MCF 10A (cell line): ENCODE measurements at regions of chr14 and their contacts with region 1.

Region 1: GRCh38 chr14:35687335-35687939 is 121.7 kb downstream of the RALGAPA1 start:
- DNase-seq: peak; percentile 63
- H3K4me3 Mint-ChIP-seq: no peak overlapping the region
- H3K27ac Mint-ChIP-seq: no peak overlapping the region
- H3K4me1 Mint-ChIP-seq: no peaks in the 10 kb centered on the region
- H3K27me3 Mint-ChIP-seq: no peaks in the 10 kb centered on the region
- CTCF ChIP-seq: peak; percentile 86

Region 2: GRCh38 chr14:35438910-35439713 is 248.3 kb before region 1 on chr14:
- CTCF ChIA-PET with region 1: interaction called, 6 read pairs
- POLR2A ChIA-PET with region 1: no interaction called
- intact Hi-C with region 1: loop called (anchors 1 kb)
- DNase-seq: peak; percentile 20
- H3K4me3 Mint-ChIP-seq: no peak overlapping the region
- H3K27ac Mint-ChIP-seq: no peak overlapping the region
- H3K4me1 Mint-ChIP-seq: no peaks in the 10 kb centered on the region
- H3K27me3 Mint-ChIP-seq: no peaks in the 10 kb centered on the region
- CTCF ChIP-seq: peak; percentile 39

Region 3: GRCh38 chr14:35533357-35534207 is 153.9 kb before region 1 on chr14 and contains the start of gene INSM2:
- CTCF ChIA-PET with region 1: no interaction called
- POLR2A ChIA-PET with region 1: no interaction called
- intact Hi-C with region 1: loop called (anchors 5 kb)
- DNase-seq: peak; percentile 56
- H3K4me3 Mint-ChIP-seq: peak within 1 kb of the TSS; percentile 74
- H3K27ac Mint-ChIP-seq: no peak within 1 kb of the TSS
- H3K4me1 Mint-ChIP-seq: peaks cover 6% of the 10 kb centered on the region
- H3K27me3 Mint-ChIP-seq: peaks cover 49% of the 10 kb centered on the region
- CTCF ChIP-seq: no peak
- total RNA-seq, gene INSM2: 0.09 and 0.10 TPM in 2 replicates

Region 4: DNA sequence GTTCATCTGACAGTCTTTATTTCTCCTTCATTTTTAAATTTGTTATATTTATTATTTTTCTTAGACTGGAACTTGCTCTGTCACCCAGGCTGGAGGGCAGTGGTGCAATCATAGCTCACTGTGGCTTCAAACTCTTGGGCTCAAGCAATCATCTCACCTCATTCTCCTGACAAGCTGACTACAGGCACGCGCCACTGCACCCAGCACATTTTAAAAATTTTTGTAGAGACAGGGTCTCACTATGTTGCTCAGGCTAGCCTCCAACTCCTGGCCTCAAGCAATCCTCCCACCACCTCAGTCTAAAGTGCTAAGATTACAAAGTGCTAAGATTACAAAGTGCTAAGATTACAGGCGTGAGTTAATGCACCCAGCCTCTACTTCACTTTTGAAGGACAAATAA is 25.0 kb after region 1 on chr14:
- CTCF ChIA-PET with region 1: no interaction called
- POLR2A ChIA-PET with region 1: no interaction called
- intact Hi-C with region 1: no loop called
- DNase-seq: no peak
- H3K4me3 Mint-ChIP-seq: no peak overlapping the region
- H3K27ac Mint-ChIP-seq: no peak overlapping the region
- H3K4me1 Mint-ChIP-seq: peaks cover 13% of the 10 kb centered on the region
- H3K27me3 Mint-ChIP-seq: no peaks in the 10 kb centered on the region
- CTCF ChIP-seq: no peak

Region 5: GRCh38 chr14:35814371-35815005 is 127.1 kb after region 1 on chr14:
- CTCF ChIA-PET with region 1: interaction called, 34 read pairs
- POLR2A ChIA-PET with region 1: interaction called, 3 read pairs
- intact Hi-C with region 1: loop called (anchors 5 kb)
- DNase-seq: peak; percentile 82
- H3K4me3 Mint-ChIP-seq: no peak overlapping the region
- H3K27ac Mint-ChIP-seq: no peak overlapping the region
- H3K4me1 Mint-ChIP-seq: peaks cover under 1% of the 10 kb centered on the region
- H3K27me3 Mint-ChIP-seq: no peaks in the 10 kb centered on the region
- CTCF ChIP-seq: peak; percentile 77